ENCODE measurements at regions of chr19 and their contacts with region 1.

Region 1: DNA sequence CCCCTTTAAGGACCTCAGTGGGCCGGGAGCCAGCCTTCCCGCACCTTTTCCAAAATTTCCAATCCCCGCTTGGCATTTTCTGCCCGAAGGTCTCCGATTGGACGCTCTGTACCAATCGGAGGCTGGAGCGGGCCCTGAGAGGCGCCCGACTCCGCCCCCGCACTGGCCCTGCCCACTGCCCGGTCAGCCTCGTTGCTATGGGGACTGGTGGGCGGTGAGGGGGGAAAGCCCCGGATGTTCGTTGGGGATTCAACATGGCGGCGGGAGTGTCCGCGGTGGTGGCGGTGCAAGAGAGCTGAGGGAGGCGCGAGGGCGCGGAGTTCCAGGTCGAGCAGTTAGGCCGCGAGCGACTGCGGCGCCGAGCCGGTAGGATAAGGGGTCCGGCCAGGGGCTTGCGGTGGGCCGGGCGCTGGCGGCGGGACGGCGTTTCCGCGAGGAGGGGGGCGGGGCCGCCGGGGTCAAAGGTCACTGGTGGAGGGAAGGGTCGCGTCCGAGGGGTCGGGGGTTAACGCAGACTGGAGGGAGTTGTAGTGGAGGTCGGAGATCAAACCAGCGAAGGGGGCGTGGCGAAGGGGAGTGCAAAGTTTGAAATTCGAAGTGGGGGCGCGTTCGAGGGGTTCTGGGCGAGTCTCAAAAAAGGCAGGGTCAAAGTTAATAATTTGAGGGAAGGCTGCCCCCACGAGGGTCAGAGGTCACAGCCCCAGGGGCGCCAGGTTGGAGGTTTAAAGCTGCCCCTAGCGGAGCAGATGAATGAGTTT is at the start of gene PAK4:
- DNase-seq: peak; percentile 99
- ATAC-seq: peak; percentile 95
- H3K4me3 ChIP-seq: peak within 1 kb of the TSS; percentile 63 to 90
- H3K27ac ChIP-seq: peak within 1 kb of the TSS; percentile 89
- H3K4me1 ChIP-seq: peaks cover 46% of the 10 kb centered on the region
- H3K27me3 ChIP-seq: no peaks in the 10 kb centered on the region
- CTCF ChIP-seq: no peak
- total RNA-seq, gene PAK4: 311 TPM

Region 2: DNA sequence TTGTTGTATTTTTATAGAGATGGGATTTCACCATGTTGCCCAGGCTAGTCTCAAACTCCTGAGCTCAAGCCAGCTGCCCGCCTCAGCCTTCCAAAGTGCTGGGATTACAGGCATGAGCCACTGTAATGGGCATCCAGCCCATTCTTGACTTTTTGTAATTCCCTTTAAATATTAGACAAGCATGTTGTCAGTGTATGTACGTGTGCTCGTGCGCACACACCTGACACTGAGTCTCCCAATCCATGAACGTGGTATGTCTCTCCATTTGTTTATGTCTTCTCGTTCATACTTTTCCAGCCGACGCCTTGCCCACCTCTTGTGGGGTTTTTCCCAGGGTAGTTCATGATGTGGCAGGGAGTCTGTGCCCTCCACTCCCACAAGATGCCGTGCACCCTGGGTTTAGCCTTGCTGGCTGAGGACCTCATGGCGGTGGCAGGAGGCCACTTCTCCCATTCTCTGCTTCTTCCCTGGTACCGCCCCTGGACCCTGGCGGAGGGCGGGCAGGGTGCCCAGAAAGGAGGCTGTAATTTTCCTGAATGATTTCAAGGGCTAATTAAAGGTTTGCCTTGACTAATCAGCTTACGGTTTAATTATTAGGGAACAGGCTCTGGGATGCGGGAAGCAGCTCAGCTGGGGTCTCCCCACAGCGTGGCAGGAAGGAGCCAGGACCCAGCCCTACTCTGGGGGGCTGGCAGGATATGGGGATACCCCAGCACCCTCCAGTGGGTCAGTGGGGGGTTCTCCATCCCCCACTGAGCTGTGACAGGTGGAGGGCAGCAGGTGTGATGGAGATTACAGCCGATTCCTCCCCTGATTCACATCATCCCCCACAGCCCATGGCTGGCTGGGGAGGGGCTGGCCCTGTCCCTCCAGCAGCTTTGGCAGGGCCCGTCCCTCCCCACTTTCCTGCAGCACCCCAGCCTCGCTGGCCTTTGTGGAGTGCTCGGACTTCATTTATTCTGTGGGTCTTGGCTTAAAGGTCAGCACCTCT is 12.8 kb after region 1 on chr19:
- CTCF ChIA-PET with region 1: interaction called, 13 read pairs
- POLR2A ChIA-PET with region 1: interaction called, 3 read pairs
- in situ Hi-C with region 1: no loop called
- intact Hi-C with region 1: no loop called
- DNase-seq: no peak
- ATAC-seq: no peak
- H3K4me3 ChIP-seq: no peak overlapping the region
- H3K27ac ChIP-seq: no peak overlapping the region
- H3K4me1 ChIP-seq: peaks cover 44% of the 10 kb centered on the region
- H3K27me3 ChIP-seq: no peaks in the 10 kb centered on the region
- CTCF ChIP-seq: no peak

Region 3: GRCh38 chr19:39156326-39157230 is 30.8 kb after region 1 on chr19:
- CTCF ChIA-PET with region 1: interaction called, 4 read pairs
- POLR2A ChIA-PET with region 1: interaction called, 10 read pairs
- in situ Hi-C with region 1: no loop called
- intact Hi-C with region 1: no loop called
- DNase-seq: no peak
- ATAC-seq: no peak
- H3K4me3 ChIP-seq: no peak overlapping the region
- H3K27ac ChIP-seq: no peak overlapping the region
- H3K4me1 ChIP-seq: peaks cover 66% of the 10 kb centered on the region
- H3K27me3 ChIP-seq: no peaks in the 10 kb centered on the region
- CTCF ChIP-seq: no peak

Region 4: GRCh38 chr19:39187559-39187957 is 61.8 kb after region 1 on chr19:
- CTCF ChIA-PET with region 1: interaction called, 5 read pairs
- POLR2A ChIA-PET with region 1: interaction called, 3 read pairs
- in situ Hi-C with region 1: no loop called
- intact Hi-C with region 1: loop called (anchors 1 kb)
- DNase-seq: no peak
- ATAC-seq: peak; percentile 40
- H3K4me3 ChIP-seq: no peak overlapping the region
- H3K27ac ChIP-seq: no peak overlapping the region
- H3K4me1 ChIP-seq: no peaks in the 10 kb centered on the region; the same call in 1 of the 2 replicates
- H3K27me3 ChIP-seq: no peaks in the 10 kb centered on the region
- CTCF ChIP-seq: no peak

Region 5: GRCh38 chr19:39270036-39270871 is 144.5 kb after region 1 on chr19:
- CTCF ChIA-PET with region 1: interaction called, 10 read pairs
- POLR2A ChIA-PET with region 1: no interaction called
- in situ Hi-C with region 1: no loop called
- intact Hi-C with region 1: no loop called
- DNase-seq: no peak
- ATAC-seq: peak; percentile 31
- H3K4me3 ChIP-seq: no peak overlapping the region
- H3K27ac ChIP-seq: no peak overlapping the region
- H3K4me1 ChIP-seq: no peaks in the 10 kb centered on the region
- H3K27me3 ChIP-seq: no peaks in the 10 kb centered on the region
- CTCF ChIP-seq: no peak